HepG2 (cell line): ENCODE measurements at regions of chr15 and their contacts with region 1.

Region 1: GRCh38 chr15:69462493-69463181 is 10.0 kb downstream of the RPLP1 start:
- DNase-seq: peak; percentile 96
- ATAC-seq: peak; percentile 89
- H3K4me3 ChIP-seq: peak overlapping the region; percentile 54 to 81 (median 79)
- H3K27ac ChIP-seq: peak overlapping the region; percentile 86
- H3K4me1 ChIP-seq: peaks cover 32% of the 10 kb centered on the region
- H3K27me3 ChIP-seq: peaks cover 0 to 5% of the 10 kb centered on the region in 2 experiments; a peak in 3 of 5 replicates
- CTCF ChIP-seq: peak; percentile 93
- EP300 ChIP-seq: no peak
- POLR2A ChIP-seq: peak; percentile 78 to 83
- RAD21 ChIP-seq: no peak

Region 2: DNA sequence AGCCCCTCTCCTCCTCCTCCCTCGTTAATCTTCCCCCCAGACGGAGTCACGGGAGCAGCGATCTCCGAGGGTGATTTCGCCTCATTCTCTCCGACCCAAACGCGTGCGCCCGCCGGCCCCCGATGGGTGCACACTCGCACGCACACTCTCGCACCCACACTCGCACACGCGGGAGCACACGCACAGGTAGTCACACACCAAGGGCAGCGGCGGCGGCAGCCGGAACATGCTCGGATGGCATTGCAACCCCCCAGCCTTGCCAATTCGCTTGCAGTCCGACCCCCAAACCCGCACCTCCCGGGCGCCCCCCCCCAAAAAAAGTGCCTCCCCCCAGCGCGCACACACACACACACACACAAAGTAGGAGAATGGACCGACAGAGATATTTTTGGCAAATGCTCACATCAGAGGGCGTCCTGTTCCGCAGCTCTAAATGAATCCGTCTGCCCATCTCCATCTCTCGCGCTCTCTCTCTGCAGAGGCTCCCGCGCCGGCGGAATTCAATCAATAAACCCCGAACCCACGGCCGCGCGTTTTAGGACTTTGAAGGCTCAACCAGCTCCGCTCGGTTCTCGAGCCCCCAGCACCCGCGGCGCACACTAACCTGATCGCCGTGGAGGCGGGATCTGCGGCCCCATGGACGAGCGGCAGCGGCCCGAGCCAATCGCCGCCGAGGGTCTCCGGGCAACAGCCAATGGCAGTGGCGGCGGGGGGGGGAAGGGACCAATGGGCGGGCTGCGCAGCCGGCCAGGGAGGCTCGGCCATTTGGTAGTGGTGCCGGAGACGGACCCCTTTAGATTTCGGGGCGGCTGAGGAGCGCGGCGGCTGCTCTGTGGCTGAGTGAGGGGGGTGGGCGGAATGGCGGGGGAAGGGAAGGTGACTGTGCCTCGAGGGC is 642.1 kb before region 1 on chr15 and contains the start of gene ANP32A:
- CTCF ChIA-PET with region 1: no interaction called
- POLR2A ChIA-PET with region 1: interaction called, 3 read pairs
- in situ Hi-C with region 1: loop called (anchors 25 kb)
- intact Hi-C with region 1: no loop called
- DNase-seq: peak; percentile 85
- ATAC-seq: peak; percentile 80
- H3K4me3 ChIP-seq: peak within 1 kb of the TSS; percentile 83 to 100 (median 84)
- H3K27ac ChIP-seq: peak within 1 kb of the TSS; percentile 97
- H3K4me1 ChIP-seq: peaks cover 26% of the 10 kb centered on the region
- H3K27me3 ChIP-seq: no peaks in the 10 kb centered on the region; a peak in 1 of 5 replicates
- CTCF ChIP-seq: no peak
- EP300 ChIP-seq: no peak
- POLR2A ChIP-seq: peak; percentile 12 to 77; a peak in 3 of 4 replicates
- RAD21 ChIP-seq: no peak
- total RNA-seq, gene ANP32A: 206 and 323 TPM in 2 replicates

Region 3: GRCh38 chr15:69413822-69414700 is 48.6 kb before region 1 on chr15 and contains the start of gene KIF23:
- CTCF ChIA-PET with region 1: no interaction called
- POLR2A ChIA-PET with region 1: interaction called, 8 read pairs
- in situ Hi-C with region 1: no loop called
- intact Hi-C with region 1: loop called (anchors 2 kb)
- DNase-seq: peak; percentile 87
- ATAC-seq: peak; percentile 98
- H3K4me3 ChIP-seq: peak within 1 kb of the TSS; percentile 77 to 98 (median 96)
- H3K27ac ChIP-seq: peak within 1 kb of the TSS; percentile 83
- H3K4me1 ChIP-seq: peaks cover 27% of the 10 kb centered on the region
- H3K27me3 ChIP-seq: no peaks in the 10 kb centered on the region
- CTCF ChIP-seq: 0 out of 2 replicates have a peak, but pooled peaks have one; percentile 3
- EP300 ChIP-seq: no peak
- POLR2A ChIP-seq: peak; percentile 63 to 64; a peak in 3 of 4 replicates
- RAD21 ChIP-seq: 0 out of 2 replicates have a peak, but pooled peaks have one; percentile 17
- total RNA-seq, gene KIF23: 38.1 and 51.2 TPM in 2 replicates

Region 4: GRCh38 chr15:69593981-69594966 is 131.6 kb after region 1 on chr15:
- CTCF ChIA-PET with region 1: interaction called, 3 read pairs
- POLR2A ChIA-PET with region 1: interaction called, 3 read pairs
- in situ Hi-C with region 1: no loop called
- intact Hi-C with region 1: loop called (anchors 5 kb)
- DNase-seq: peak; percentile 98
- ATAC-seq: peak; percentile 91
- H3K4me3 ChIP-seq: no peak overlapping the region
- H3K27ac ChIP-seq: no peak overlapping the region
- H3K4me1 ChIP-seq: peaks cover 36% of the 10 kb centered on the region
- H3K27me3 ChIP-seq: peaks cover 22 to 82% of the 10 kb centered on the region in 2 experiments; a peak in 4 of 5 replicates
- CTCF ChIP-seq: no peak
- EP300 ChIP-seq: peak; percentile 84 to 92
- POLR2A ChIP-seq: no peak
- RAD21 ChIP-seq: no peak; the same call in 1 of the 2 replicates